Right cardiac atrium (tissue), 5 donors: ENCODE measurements at regions of chr19 and their contacts with region 1.

Region 1: GRCh38 chr19:47713046-47714021 is at the start of gene EHD2:
- DNase-seq: peak; percentile 84 to 93 (median 92)
- ATAC-seq: peak; percentile 96 to 97
- H3K4me3 ChIP-seq: peak within 1 kb of the TSS; percentile 79
- H3K27ac ChIP-seq: peak within 1 kb of the TSS; percentile 98
- H3K4me1 ChIP-seq: peaks cover 9% of the 10 kb centered on the region
- H3K27me3 ChIP-seq: no peaks in the 10 kb centered on the region
- total RNA-seq, gene EHD2: 32.8 to 61.9 (median 49.1) TPM

Region 2: GRCh38 chr19:47742634-47743033 is 29.3 kb after region 1 on chr19:
- intact Hi-C with region 1: loop called in 2 of 4 experiments (anchors 2 kb)
- DNase-seq: no peak
- ATAC-seq: peak in 1 of 2 donors; percentile 0
- H3K4me3 ChIP-seq: no peak overlapping the region
- H3K27ac ChIP-seq: peak overlapping the region; percentile 80
- H3K4me1 ChIP-seq: peaks cover 2% of the 10 kb centered on the region
- H3K27me3 ChIP-seq: no peaks in the 10 kb centered on the region

Region 3: DNA sequence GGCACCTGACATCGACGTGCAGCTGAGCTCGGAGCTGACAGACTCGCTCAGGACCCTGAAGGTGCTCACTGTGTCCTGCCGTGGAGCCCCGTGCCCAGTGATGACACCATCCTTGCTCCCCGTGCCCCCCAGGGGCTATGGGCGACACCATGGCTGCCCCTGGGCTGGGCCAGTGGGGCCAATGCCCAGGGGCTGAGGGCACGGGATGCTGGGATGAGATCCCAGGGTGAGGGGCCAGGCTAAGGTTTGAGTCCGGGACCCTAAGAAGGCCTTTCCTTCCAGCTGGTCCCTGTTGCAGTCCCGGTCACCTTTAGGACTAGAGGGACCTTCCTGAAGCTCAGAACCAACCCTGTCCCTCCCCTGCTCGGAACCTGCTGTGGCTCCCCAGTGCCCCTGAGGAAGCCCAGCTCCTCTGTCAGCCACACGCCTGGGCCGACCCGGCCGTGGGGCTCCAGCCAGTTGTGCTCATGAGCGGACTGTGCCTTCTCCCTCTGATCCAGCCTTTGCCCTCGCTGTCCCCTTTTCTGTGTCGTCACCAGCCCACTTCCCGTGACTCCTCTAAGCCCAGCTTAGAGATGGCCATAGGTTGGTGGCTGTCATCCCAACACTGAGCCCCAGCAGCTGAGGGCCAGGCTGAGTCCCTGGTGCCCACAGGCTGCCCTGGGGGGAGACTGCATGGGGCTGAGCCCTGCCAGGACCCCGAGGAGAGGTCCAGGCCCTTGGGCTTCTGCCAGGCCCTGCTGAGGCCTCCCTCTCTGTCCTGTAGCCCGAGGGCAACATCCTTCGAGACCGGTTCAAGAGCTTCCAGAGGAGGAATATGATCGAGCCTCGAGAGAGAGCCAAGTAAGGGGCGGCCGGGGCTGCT is 42.7 kb after region 1 on chr19:
- intact Hi-C with region 1: no loop called
- DNase-seq: peak in 1 of 3 donors; percentile 63
- ATAC-seq: peak in 1 of 2 donors; percentile 5
- H3K4me3 ChIP-seq: no peak overlapping the region
- H3K27ac ChIP-seq: no peak overlapping the region
- H3K4me1 ChIP-seq: no peaks in the 10 kb centered on the region
- H3K27me3 ChIP-seq: no peaks in the 10 kb centered on the region